T-cell (primary cell): ENCODE measurements at regions of chr13 and their contacts with region 1.

Region 1: GRCh38 chr13:47126432-47126831 is 229.6 kb upstream of the HTR2A start:
- DNase-seq: no peak
- ATAC-seq: no peak
- H3K4me3 ChIP-seq: no peak overlapping the region
- H3K4me3 Mint-ChIP-seq: no peak overlapping the region
- H3K27ac ChIP-seq: no peak overlapping the region
- H3K27ac Mint-ChIP-seq: no peak overlapping the region
- H3K4me1 ChIP-seq: no peaks in the 10 kb centered on the region
- H3K4me1 Mint-ChIP-seq: no peaks in the 10 kb centered on the region
- H3K27me3 ChIP-seq: no peaks in the 10 kb centered on the region
- H3K27me3 Mint-ChIP-seq: peaks cover 3 to 6% of the 10 kb centered on the region in 2 donors

Region 2: GRCh38 chr13:45564133-45564776 is 1562.2 kb before region 1 on chr13:
- CTCF ChIA-PET with region 1: no interaction called
- POLR2A ChIA-PET with region 1: no interaction called
- DNase-seq: no peak
- ATAC-seq: no peak
- H3K4me3 ChIP-seq: no peak overlapping the region
- H3K4me3 Mint-ChIP-seq: no peak overlapping the region
- H3K27ac ChIP-seq: no peak overlapping the region
- H3K27ac Mint-ChIP-seq: no peak overlapping the region
- H3K4me1 ChIP-seq: no peaks in the 10 kb centered on the region
- H3K4me1 Mint-ChIP-seq: no peaks in the 10 kb centered on the region
- H3K27me3 ChIP-seq: peaks cover 0 to 5% of the 10 kb centered on the region in 2 experiments
- H3K27me3 Mint-ChIP-seq: peaks cover 11 to 17% of the 10 kb centered on the region in 2 donors

Region 3: GRCh38 chr13:47142105-47142504 is 15.7 kb after region 1 on chr13:
- CTCF ChIA-PET with region 1: no interaction called
- POLR2A ChIA-PET with region 1: no interaction called
- DNase-seq: no peak
- ATAC-seq: no peak
- H3K4me3 ChIP-seq: no peak overlapping the region
- H3K4me3 Mint-ChIP-seq: no peak overlapping the region
- H3K27ac ChIP-seq: no peak overlapping the region
- H3K27ac Mint-ChIP-seq: no peak overlapping the region
- H3K4me1 ChIP-seq: no peaks in the 10 kb centered on the region
- H3K4me1 Mint-ChIP-seq: no peaks in the 10 kb centered on the region
- H3K27me3 ChIP-seq: no peaks in the 10 kb centered on the region
- H3K27me3 Mint-ChIP-seq: peaks cover 0 to 6% of the 10 kb centered on the region in 2 donors

Region 4: DNA sequence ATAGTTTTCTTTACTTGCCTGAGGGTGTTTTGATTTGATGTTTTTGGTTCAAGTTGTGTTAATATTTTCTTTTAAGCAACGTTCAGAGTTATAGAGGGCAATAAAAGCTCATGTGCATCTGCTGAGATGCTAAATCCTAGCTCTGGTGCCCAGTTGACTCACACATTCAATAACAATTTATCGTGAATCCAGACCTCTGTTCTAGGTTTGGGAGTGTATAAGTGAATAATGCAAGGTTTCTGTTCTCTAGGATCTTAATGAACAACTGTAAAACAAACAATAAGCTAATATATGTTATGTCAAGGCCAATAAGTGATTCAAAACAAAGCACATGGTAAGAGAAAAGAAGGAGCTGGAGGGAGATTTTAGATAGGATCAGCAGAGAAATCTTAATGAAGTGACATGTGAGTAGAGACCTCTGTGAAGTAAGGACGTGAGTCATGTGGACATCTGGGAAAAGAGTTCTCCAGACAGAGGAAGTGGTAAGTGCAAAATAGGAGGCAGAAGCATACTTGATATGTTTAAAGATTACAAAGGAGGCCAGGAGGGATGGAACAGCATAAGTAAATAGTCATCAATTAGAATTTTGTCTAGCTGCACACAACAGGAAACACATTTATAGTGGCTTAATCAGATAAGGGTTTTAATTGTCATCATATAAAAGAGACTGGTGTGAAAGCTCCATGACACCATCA is 48.9 kb after region 1 on chr13:
- CTCF ChIA-PET with region 1: no interaction called
- POLR2A ChIA-PET with region 1: interaction called in 1 of 2 experiments, 11 read pairs
- DNase-seq: no peak
- ATAC-seq: no peak
- H3K4me3 ChIP-seq: no peak overlapping the region
- H3K4me3 Mint-ChIP-seq: no peak overlapping the region
- H3K27ac ChIP-seq: no peak overlapping the region
- H3K27ac Mint-ChIP-seq: no peak overlapping the region
- H3K4me1 ChIP-seq: no peaks in the 10 kb centered on the region
- H3K4me1 Mint-ChIP-seq: no peaks in the 10 kb centered on the region
- H3K27me3 ChIP-seq: no peaks in the 10 kb centered on the region
- H3K27me3 Mint-ChIP-seq: peaks cover 0 to 6% of the 10 kb centered on the region in 2 donors